Heart right ventricle (tissue), 16 donors: ENCODE measurements at regions of chr12 and their contacts with region 1.

Region 1: GRCh38 chr12:56299853-56300643 is at the start of gene CS:
- DNase-seq: peak; percentile 98 to 99
- ATAC-seq: peak; percentile 97 to 99 (median 98)
- H3K4me3 ChIP-seq: peak within 1 kb of the TSS; percentile 68 to 99 (median 84)
- H3K27ac ChIP-seq: peak within 1 kb of the TSS; percentile 87 to 100 (median 96)
- H3K4me1 ChIP-seq: peaks cover 19 to 72% (median 58%) of the 10 kb centered on the region in 9 donors
- H3K27me3 ChIP-seq: no peaks in the 10 kb centered on the region
- CTCF ChIP-seq: no peak
- total RNA-seq, gene CS: 601 to 991 (median 877) TPM

Region 2: DNA sequence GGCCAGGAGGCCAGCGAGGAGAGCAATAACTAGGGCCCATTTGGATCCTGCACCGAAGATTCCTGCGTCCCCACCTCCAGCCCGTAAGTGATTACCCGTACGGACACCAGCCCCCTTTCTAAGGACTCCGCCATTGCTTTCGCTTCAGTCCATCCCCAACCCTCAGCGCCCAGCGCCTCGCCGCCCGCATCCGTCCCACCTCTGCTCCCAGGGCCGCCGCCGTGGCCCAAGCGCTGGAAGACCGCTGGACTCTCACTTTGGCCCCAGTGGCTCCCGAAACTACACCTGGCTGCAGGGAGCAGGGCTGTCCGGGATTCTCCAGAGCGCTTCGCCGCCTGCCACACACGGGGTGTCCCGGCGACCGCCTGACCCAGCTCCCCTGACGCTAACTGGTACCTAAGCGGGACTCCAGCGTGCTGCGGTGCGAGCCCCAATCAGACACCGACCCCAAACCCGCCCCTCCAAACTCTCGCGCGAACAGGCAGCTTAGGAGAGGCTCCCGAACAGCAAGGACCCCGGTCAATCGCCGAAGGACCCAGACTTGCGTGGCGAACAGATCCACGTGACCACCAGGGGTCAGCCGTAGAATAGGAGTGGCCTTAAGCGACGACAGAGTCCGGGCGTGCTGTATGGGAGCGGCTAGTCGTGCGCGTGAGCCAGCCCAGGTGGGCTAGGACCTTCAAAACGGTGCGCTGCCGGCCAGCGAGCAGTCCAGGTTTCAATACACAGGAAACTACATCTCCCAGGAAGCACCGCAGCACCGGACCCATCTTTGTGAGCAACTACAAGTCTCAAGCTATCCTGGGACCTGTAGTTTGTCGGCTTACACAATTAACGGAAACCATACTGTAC is 15.8 kb after region 1 on chr12 and contains the start of gene CNPY2:
- intact Hi-C with region 1: loop called in 1 of 10 experiments (anchors 2 kb)
- DNase-seq: peak; percentile 94 to 97
- ATAC-seq: peak; percentile 95 to 97 (median 96)
- H3K4me3 ChIP-seq: peak within 1 kb of the TSS; percentile 61 to 99 (median 94)
- H3K27ac ChIP-seq: peak within 1 kb of the TSS; percentile 88 to 98 (median 94)
- H3K4me1 ChIP-seq: peaks cover 7 to 23% (median 16%) of the 10 kb centered on the region in 9 donors
- H3K27me3 ChIP-seq: no peaks in the 10 kb centered on the region
- CTCF ChIP-seq: peak in 5 of 9 donors; percentile 7 to 38 (median 21)
- total RNA-seq, gene CNPY2: 22.3 to 51.0 (median 38.7) TPM

Region 3: DNA sequence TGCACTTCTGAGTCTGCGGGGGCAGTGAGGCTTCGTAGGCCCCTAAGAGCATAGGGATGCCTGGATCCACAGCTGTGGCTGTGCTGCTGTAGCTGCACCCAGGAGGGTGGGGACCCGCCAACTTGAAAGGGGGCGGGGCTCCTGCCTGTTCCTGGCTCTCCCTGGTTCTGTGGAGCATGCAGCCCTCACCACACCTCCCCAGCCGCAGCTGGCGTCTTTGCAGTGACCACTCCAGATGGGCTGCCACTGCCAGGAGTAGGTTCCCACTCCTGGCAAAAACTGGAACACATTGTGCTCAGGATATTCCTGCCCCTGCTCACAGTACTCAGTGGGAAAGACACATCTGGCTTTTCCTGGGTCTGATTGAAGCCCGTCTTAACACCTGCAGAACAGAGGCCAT is 113.3 kb after region 1 on chr12:
- intact Hi-C with region 1: no loop called
- DNase-seq: no peak
- ATAC-seq: peak in 3 of 8 donors; percentile 18 to 28 (median 28)
- H3K4me3 ChIP-seq: no peak overlapping the region
- H3K27ac ChIP-seq: no peak overlapping the region
- H3K4me1 ChIP-seq: peaks cover 0 to 10% (median 0%) of the 10 kb centered on the region in 9 donors
- H3K27me3 ChIP-seq: no peaks in the 10 kb centered on the region
- CTCF ChIP-seq: no peak